GM10248 (cell line): ENCODE measurements at regions of chr12 and their contacts with region 1.

Region 1: GRCh38 chr12:6323340-6323994 is 13.0 kb downstream of the PLEKHG6 start:
- DNase-seq: peak; percentile 67
- CTCF ChIP-seq: peak; percentile 40

Region 2: DNA sequence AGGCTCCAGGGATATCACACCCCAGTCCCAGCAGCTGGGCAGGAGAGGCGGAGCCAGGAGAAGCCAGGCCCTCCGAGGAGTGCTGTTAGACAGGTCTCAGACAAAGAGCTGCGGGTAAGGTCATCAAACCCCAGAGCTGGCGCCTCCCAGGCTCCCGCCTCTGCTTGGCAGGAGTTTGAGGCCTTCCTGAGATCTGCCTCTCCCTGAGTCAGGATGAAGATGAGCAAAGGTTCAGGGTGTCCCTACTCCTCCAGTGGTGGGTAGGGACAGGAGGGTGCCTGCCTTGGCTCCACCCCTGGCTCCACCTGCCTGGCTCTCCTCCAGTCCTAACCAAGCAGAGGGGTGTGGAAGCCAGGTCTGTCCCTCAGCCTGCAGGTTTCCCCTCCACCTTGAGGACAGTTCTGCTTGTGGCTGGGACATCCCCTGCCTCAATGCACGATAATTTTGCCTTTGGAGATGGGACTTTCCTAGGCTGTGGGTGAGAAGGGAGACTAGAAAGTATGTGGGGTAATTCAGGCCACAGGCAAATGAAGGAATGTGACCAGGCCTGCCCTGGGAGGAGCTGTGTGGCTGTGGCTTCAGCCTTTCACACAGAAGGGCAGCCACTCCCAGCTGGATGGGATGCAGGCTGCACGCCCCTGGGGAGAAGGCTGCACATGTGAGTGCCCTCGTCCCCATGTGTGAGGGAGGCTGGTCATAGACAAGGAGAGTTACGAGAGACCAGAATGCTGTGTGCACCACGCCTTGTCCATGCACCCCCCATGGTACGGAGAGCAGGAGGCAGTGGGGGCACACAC is 10.7 kb before region 1 on chr12:
- CTCF ChIA-PET with region 1: interaction called, 14 read pairs
- POLR2A ChIA-PET with region 1: no interaction called
- DNase-seq: peak; percentile 74
- CTCF ChIP-seq: no peak

Region 3: GRCh38 chr12:6335451-6336078 is 12.1 kb after region 1 on chr12:
- CTCF ChIA-PET with region 1: interaction called, 24 read pairs
- POLR2A ChIA-PET with region 1: no interaction called
- DNase-seq: peak; percentile 92
- CTCF ChIP-seq: peak; percentile 73